PC-3 (cell line): ENCODE measurements at regions of chr3 and their contacts with region 1.

Region 1: DNA sequence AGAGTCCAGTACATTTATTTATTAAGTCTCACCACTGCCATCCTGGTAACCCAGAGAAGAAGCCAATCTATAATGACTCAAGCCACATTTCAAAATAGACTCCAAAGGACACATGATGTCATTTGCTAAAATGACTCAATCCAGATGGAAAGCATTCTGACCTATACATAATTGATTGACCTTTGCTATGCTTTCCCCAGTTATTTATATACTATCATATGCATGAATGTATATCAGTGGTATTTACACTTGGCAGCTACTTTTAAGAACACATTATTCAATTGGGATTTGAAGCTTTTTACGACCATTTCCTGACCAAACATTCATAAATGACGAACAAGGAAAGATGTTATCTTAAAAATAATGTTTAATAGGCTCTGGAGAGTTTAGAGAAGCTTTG is 297.2 kb downstream of the FHIT start:
- DNase-seq: peak; percentile 83
- ATAC-seq: peak; percentile 85
- H3K4me3 ChIP-seq: no peak overlapping the region
- H3K27ac ChIP-seq: peak overlapping the region; percentile 74
- H3K4me1 ChIP-seq: peaks cover 14% of the 10 kb centered on the region
- H3K27me3 ChIP-seq: no peaks in the 10 kb centered on the region
- CTCF ChIP-seq: no peak

Region 2: GRCh38 chr3:61181874-61182273 is 227.8 kb after region 1 on chr3:
- CTCF ChIA-PET with region 1: no interaction called
- POLR2A ChIA-PET with region 1: no interaction called
- intact Hi-C with region 1: loop called (anchors 10 kb)
- DNase-seq: peak; percentile 95
- ATAC-seq: peak; percentile 99
- H3K4me3 ChIP-seq: no peak overlapping the region
- H3K27ac ChIP-seq: no peak overlapping the region
- H3K4me1 ChIP-seq: peaks cover 21% of the 10 kb centered on the region
- H3K27me3 ChIP-seq: no peaks in the 10 kb centered on the region
- CTCF ChIP-seq: no peak

Region 3: GRCh38 chr3:61251174-61251972 is 297.3 kb after region 1 on chr3 and contains the start of gene FHIT:
- CTCF ChIA-PET with region 1: no interaction called
- POLR2A ChIA-PET with region 1: no interaction called
- intact Hi-C with region 1: loop called (anchors 5 kb)
- DNase-seq: peak; percentile 95
- ATAC-seq: peak; percentile 98
- H3K4me3 ChIP-seq: peak within 1 kb of the TSS; percentile 69
- H3K27ac ChIP-seq: no peak within 1 kb of the TSS
- H3K4me1 ChIP-seq: peaks cover 16% of the 10 kb centered on the region
- H3K27me3 ChIP-seq: no peaks in the 10 kb centered on the region
- CTCF ChIP-seq: no peak
- total RNA-seq, gene FHIT: 1.2 and 3.6 TPM in 2 replicates

Region 4: GRCh38 chr3:61381745-61382392 is 427.8 kb after region 1 on chr3:
- CTCF ChIA-PET with region 1: no interaction called
- POLR2A ChIA-PET with region 1: no interaction called
- intact Hi-C with region 1: loop called (anchors 10 kb)
- DNase-seq: peak; percentile 69
- ATAC-seq: peak; percentile 74
- H3K4me3 ChIP-seq: no peak overlapping the region
- H3K27ac ChIP-seq: no peak overlapping the region
- H3K4me1 ChIP-seq: no peaks in the 10 kb centered on the region
- H3K27me3 ChIP-seq: no peaks in the 10 kb centered on the region
- CTCF ChIP-seq: peak; percentile 85